ENCODE measurements at regions of chr3 and their contacts with region 1.

Region 1: GRCh38 chr3:141192345-141192744 is 39.3 kb upstream of the PXYLP1 start:
- DNase-seq: peak; percentile 96
- H3K4me3 Mint-ChIP-seq: no peak overlapping the region
- H3K27ac Mint-ChIP-seq: no peak overlapping the region
- H3K4me1 Mint-ChIP-seq: peaks cover 8% of the 10 kb centered on the region
- H3K27me3 Mint-ChIP-seq: peaks cover 28% of the 10 kb centered on the region
- CTCF ChIP-seq: peak; percentile 96

Region 2: GRCh38 chr3:140898340-140899180 is 293.8 kb before region 1 on chr3:
- CTCF ChIA-PET with region 1: interaction called, 37 read pairs
- POLR2A ChIA-PET with region 1: interaction called, 3 read pairs
- intact Hi-C with region 1: loop called (anchors 1 kb)
- DNase-seq: peak; percentile 83
- H3K4me3 Mint-ChIP-seq: no peak overlapping the region
- H3K27ac Mint-ChIP-seq: no peak overlapping the region
- H3K4me1 Mint-ChIP-seq: peaks cover 10% of the 10 kb centered on the region
- H3K27me3 Mint-ChIP-seq: peaks cover 30% of the 10 kb centered on the region
- CTCF ChIP-seq: peak; percentile 61

Region 3: GRCh38 chr3:140922634-140923033 is 269.7 kb before region 1 on chr3:
- CTCF ChIA-PET with region 1: interaction called, 3 read pairs
- POLR2A ChIA-PET with region 1: no interaction called
- intact Hi-C with region 1: loop called (anchors 1 kb)
- DNase-seq: no peak
- H3K4me3 Mint-ChIP-seq: no peak overlapping the region
- H3K27ac Mint-ChIP-seq: no peak overlapping the region
- H3K4me1 Mint-ChIP-seq: no peaks in the 10 kb centered on the region
- H3K27me3 Mint-ChIP-seq: peaks cover 32% of the 10 kb centered on the region
- CTCF ChIP-seq: peak; percentile 31

Region 4: GRCh38 chr3:141105828-141106628 is 86.3 kb before region 1 on chr3:
- CTCF ChIA-PET with region 1: interaction called, 7 read pairs
- POLR2A ChIA-PET with region 1: no interaction called
- intact Hi-C with region 1: loop called (anchors 1 kb)
- DNase-seq: peak; percentile 81
- H3K4me3 Mint-ChIP-seq: no peak overlapping the region
- H3K27ac Mint-ChIP-seq: no peak overlapping the region
- H3K4me1 Mint-ChIP-seq: no peaks in the 10 kb centered on the region
- H3K27me3 Mint-ChIP-seq: no peaks in the 10 kb centered on the region
- CTCF ChIP-seq: peak; percentile 65

Region 5: DNA sequence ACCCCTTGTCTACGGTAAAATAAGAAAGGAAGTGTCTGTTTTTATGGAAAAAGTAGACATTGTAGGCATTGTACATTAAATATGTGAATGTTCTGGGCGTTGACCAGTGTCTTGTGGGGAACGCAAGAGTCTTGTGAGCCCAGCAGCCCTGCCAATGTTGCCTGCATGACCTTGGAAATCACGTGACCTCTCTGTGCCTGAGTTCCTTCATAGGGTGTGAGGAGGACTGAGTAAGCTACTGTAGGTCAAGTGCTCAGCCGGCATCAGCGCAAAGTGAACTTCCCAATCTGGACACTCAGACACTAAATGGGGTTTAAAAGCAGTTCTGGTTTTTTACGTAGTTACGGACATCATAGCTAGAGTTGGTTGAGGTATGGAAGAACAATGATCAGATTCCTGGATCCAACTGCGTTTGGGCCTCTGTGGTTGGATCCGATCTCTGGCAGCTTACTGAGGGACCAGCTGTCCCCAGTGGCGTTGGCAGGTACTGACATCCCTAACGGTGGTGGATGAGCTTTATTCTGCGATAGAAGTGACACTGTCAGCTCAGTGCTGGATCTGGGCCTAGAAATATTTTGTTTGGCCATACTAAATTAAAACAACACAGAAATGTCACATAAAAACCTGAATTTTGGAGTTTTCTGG is 77.4 kb before region 1 on chr3:
- CTCF ChIA-PET with region 1: interaction called, 10 read pairs
- POLR2A ChIA-PET with region 1: no interaction called
- intact Hi-C with region 1: no loop called
- DNase-seq: no peak
- H3K4me3 Mint-ChIP-seq: no peak overlapping the region
- H3K27ac Mint-ChIP-seq: no peak overlapping the region
- H3K4me1 Mint-ChIP-seq: no peaks in the 10 kb centered on the region
- H3K27me3 Mint-ChIP-seq: peaks cover 6% of the 10 kb centered on the region
- CTCF ChIP-seq: peak; percentile 26

Region 6: DNA sequence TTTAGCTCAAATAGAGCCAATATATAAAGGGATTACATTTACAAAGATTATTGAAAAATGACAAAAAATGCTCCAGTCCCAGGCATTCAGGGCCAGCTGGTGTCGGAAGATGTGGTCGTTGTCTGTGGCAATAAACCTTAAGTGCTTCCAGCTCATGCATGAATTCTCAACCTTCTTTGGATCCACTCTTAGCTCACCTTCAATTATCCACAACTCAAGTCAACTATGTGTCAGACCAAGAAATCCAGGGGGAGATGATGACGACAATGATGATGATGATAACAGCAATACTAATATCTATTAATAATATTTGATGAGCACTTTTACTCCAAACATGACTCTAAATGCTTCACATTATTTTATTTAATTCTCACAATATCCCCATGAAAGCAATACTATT is 14.3 kb before region 1 on chr3:
- CTCF ChIA-PET with region 1: interaction called, 24 read pairs
- POLR2A ChIA-PET with region 1: no interaction called
- intact Hi-C with region 1: no loop called
- DNase-seq: no peak
- H3K4me3 Mint-ChIP-seq: no peak overlapping the region
- H3K27ac Mint-ChIP-seq: no peak overlapping the region
- H3K4me1 Mint-ChIP-seq: no peaks in the 10 kb centered on the region
- H3K27me3 Mint-ChIP-seq: peaks cover 22% of the 10 kb centered on the region
- CTCF ChIP-seq: no peak